Heart right ventricle (tissue), 16 donors: ENCODE measurements at regions of chr4 and their contacts with region 1.

Region 1: GRCh38 chr4:183471946-183472708 is 27.7 kb downstream of the CDKN2AIP start:
- DNase-seq: peak; percentile 78 to 88
- ATAC-seq: peak; percentile 68 to 95 (median 92)
- H3K4me3 ChIP-seq: peak overlapping the region in 6 of 10 donors; percentile 3 to 36 (median 12)
- H3K27ac ChIP-seq: peak overlapping the region in 4 of 10 donors; percentile 16 to 53 (median 30)
- H3K4me1 ChIP-seq: peaks cover 0 to 25% (median 8%) of the 10 kb centered on the region in 9 donors
- H3K27me3 ChIP-seq: peaks cover 0 to 8% (median 0%) of the 10 kb centered on the region in 7 donors
- CTCF ChIP-seq: peak; percentile 85 to 97 (median 91)

Region 2: DNA sequence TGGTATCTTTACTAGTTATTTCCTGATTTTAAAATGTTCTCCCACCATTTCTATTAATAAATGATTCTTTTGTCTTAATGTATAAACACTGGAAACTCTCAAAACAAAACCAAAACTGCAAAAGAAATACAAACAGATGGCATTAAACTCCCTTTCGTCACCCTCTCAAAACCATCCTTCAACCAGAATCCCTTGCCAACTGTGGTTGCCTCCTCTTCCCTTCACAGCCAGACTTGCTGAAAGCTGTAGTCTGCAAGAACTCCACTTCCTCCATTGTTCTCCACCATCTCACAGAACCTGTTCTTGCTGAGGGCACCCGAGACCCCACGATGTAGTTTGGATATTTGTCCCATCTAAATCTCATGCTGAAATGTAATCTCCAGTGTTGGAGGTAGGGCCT is 276.6 kb before region 1 on chr4:
- intact Hi-C with region 1: no loop called
- DNase-seq: no peak
- ATAC-seq: no peak
- H3K4me3 ChIP-seq: no peak overlapping the region
- H3K27ac ChIP-seq: no peak overlapping the region
- H3K4me1 ChIP-seq: peaks cover 0 to 18% (median 5%) of the 10 kb centered on the region in 9 donors
- H3K27me3 ChIP-seq: no peaks in the 10 kb centered on the region
- CTCF ChIP-seq: no peak

Region 3: DNA sequence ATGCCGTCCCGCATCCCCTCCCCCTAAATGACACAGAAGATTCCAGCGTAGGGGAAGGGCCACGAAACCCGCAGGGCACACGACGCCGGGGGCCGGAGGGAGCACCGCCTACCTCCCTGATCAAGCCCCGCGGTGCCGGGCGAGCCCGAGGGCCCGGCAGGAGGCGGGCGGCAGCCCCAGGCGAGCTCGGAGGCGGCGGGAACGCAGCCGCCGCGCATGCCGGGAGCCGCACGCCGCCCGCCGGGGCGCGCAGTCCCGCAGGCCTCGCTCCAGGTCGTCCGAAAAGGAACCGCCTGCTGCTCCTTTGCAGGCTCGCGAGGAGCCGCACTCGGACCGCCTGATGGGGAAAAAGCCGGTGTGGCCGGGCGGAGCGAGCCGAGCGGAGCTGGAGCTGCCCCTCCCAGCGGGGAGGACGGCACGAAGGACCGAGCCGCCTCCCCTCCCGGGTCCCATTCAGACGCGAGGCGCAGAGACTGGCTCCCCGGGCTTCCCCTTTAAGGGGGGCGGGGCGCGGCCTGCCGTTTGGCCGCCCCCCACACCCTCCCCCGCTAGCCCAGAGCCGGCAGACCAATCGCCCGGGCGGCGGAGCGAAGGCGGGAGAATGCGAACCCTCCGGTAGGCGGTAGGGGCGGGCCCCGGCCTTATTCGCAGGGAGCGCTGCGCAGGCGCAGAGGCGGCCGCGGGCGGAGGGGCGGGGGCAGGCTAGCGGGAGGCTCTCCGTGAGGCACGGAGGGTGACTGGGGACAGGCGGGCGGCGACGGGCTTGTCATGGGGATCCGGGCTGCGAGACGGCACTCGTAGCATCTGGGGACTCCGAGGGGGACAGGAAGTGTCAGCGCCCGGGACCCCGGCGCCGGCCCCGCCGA is 32.2 kb after region 1 on chr4:
- intact Hi-C with region 1: loop called in 1 of 10 experiments (anchors 5 kb)
- DNase-seq: peak; percentile 99
- ATAC-seq: peak; percentile 94 to 99 (median 96)
- H3K4me3 ChIP-seq: peak overlapping the region; percentile 77 to 100 (median 98)
- H3K27ac ChIP-seq: peak overlapping the region; percentile 78 to 99 (median 97)
- H3K4me1 ChIP-seq: peaks cover 0 to 50% (median 19%) of the 10 kb centered on the region in 9 donors
- H3K27me3 ChIP-seq: no peaks in the 10 kb centered on the region
- CTCF ChIP-seq: peak in 7 of 9 donors; percentile 9 to 55 (median 21)

Region 4: DNA sequence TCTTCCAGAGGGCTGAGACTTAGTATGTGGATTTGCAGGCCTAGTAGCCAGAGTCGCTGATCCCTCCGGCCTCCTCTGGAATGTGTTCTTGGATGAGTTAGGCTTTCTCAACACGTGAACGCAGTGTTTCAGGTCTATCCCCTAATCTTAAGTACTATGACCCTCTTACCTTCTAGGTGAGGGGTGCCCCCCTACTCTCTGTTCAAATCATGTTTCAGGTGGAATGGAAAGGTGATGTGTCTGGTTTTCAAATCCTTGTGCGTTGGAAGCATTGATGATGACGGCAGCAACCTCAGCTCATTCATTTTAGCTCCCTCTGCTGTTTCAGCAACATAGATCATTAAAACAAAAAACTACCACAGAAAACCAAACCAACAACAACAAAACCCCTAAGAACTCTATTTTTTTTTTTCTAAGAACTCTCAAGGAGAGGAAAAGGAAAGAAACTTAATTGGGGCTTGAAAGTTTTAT is 130.5 kb after region 1 on chr4:
- intact Hi-C with region 1: loop called (anchors 1 to 10 kb)
- DNase-seq: no peak
- ATAC-seq: peak in 1 of 8 donors; percentile 24
- H3K4me3 ChIP-seq: no peak overlapping the region
- H3K27ac ChIP-seq: no peak overlapping the region
- H3K4me1 ChIP-seq: no peaks in the 10 kb centered on the region
- H3K27me3 ChIP-seq: peaks cover 0 to 6% (median 0%) of the 10 kb centered on the region in 7 donors
- CTCF ChIP-seq: peak in 8 of 9 donors; percentile 10 to 53 (median 35)

Region 5: GRCh38 chr4:183659029-183659871 is 187.1 kb after region 1 on chr4 and contains the starts of genes RWDD4 and TRAPPC11:
- intact Hi-C with region 1: loop called in 4 of 10 experiments (anchors 10 kb)
- DNase-seq: peak; percentile 98 to 99
- ATAC-seq: peak; percentile 100
- H3K4me3 ChIP-seq: peak within 1 kb of the TSS; percentile 42 to 98 (median 82)
- H3K27ac ChIP-seq: peak within 1 kb of the TSS; percentile 52 to 98 (median 88)
- H3K4me1 ChIP-seq: peaks cover 3 to 33% (median 22%) of the 10 kb centered on the region in 9 donors
- H3K27me3 ChIP-seq: no peaks in the 10 kb centered on the region
- CTCF ChIP-seq: peak in 5 of 9 donors; percentile 12 to 47 (median 35)
- total RNA-seq, gene RWDD4: 13.7 to 17.8 (median 15.2) TPM
- total RNA-seq, gene TRAPPC11: 15.3 to 24.1 (median 19.6) TPM